Naive thymus-derived CD4-positive, alpha-beta T cell (primary cell): ENCODE measurements at regions of chrX and their contacts with region 1.

Region 1: GRCh38 chrX:83469551-83469950 is 38.5 kb upstream of the POU3F4 start:
- DNase-seq: no peak
- ATAC-seq: no peak
- H3K4me3 ChIP-seq: no peak overlapping the region
- H3K4me3 Mint-ChIP-seq: no peak overlapping the region
- H3K27ac ChIP-seq: no peak overlapping the region
- H3K27ac Mint-ChIP-seq: no peak overlapping the region
- H3K4me1 ChIP-seq: no peaks in the 10 kb centered on the region
- H3K4me1 Mint-ChIP-seq: no peaks in the 10 kb centered on the region
- H3K27me3 ChIP-seq: no peaks in the 10 kb centered on the region
- H3K27me3 Mint-ChIP-seq: no peaks in the 10 kb centered on the region

Region 2: DNA sequence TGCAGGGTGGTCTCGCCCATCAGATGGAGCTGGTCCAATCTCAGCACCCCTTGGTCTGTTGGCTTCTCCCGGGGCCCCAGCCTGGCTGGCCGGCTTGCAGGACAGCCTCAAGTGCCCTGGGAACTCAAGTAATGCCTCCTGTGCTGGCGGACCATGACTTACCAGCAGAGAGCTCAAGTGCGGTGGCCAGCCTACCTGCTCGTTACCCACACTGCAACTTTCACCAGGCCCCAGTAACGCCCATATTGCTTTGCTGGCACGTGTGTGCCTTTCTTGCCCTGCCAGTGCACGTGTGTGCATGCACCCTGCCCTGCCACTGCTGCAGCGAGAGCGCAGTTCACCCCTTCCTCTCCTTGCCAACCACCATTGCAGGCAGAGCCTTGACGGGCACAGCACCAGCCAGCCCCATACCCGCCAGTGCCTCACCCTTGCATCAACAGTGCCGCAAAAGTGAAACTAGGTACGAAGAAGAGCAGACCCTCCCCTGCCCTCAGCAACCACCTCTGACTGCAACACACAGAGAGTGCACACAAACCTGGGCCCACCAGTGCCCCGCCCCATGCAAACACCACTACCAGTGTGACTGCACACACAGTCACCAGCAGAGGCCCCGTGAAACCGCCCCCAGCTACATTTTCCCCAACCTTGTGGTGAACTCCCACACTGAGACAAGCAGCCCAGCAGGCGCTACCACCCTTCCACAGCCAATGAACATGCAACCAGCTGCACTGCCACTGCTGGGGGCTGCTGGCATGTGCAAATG is 50.3 kb before region 1 on chrX:
- CTCF ChIA-PET with region 1: no interaction called
- POLR2A ChIA-PET with region 1: no interaction called
- intact Hi-C with region 1: no loop called
- DNase-seq: no peak
- ATAC-seq: no peak
- H3K4me3 ChIP-seq: no peak overlapping the region
- H3K4me3 Mint-ChIP-seq: no peak overlapping the region
- H3K27ac ChIP-seq: no peak overlapping the region
- H3K27ac Mint-ChIP-seq: no peak overlapping the region
- H3K4me1 ChIP-seq: no peaks in the 10 kb centered on the region
- H3K4me1 Mint-ChIP-seq: no peaks in the 10 kb centered on the region
- H3K27me3 ChIP-seq: no peaks in the 10 kb centered on the region
- H3K27me3 Mint-ChIP-seq: no peaks in the 10 kb centered on the region

Region 3: DNA sequence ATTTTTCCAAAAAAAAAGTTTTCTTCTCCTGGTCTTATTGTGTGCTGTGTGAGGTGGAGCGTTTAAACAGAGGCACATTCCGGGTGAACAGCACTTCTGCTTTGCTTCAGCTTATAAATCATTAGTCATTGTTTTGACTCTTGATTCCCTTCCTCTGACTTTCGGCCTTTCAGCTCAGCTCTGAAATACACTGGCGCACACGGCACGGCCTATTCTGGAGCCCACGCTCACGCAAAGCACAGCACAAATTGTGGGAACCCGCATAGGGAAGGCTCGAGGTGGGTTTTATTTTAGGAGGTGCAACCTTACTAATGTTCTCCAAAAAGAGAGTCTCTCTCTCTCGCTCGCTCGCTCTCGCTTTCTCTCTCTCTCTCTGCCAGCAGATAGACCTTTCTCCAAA is 42.6 kb after region 1 on chrX:
- CTCF ChIA-PET with region 1: no interaction called
- POLR2A ChIA-PET with region 1: no interaction called
- intact Hi-C with region 1: no loop called
- DNase-seq: no peak
- ATAC-seq: no peak
- H3K4me3 ChIP-seq: no peak overlapping the region
- H3K4me3 Mint-ChIP-seq: no peak overlapping the region
- H3K27ac ChIP-seq: no peak overlapping the region
- H3K27ac Mint-ChIP-seq: no peak overlapping the region
- H3K4me1 ChIP-seq: no peaks in the 10 kb centered on the region
- H3K4me1 Mint-ChIP-seq: peaks cover 0 to 5% (median 2%) of the 10 kb centered on the region in 7 donors
- H3K27me3 ChIP-seq: no peaks in the 10 kb centered on the region
- H3K27me3 Mint-ChIP-seq: peaks cover 38 to 51% (median 40%) of the 10 kb centered on the region in 5 donors

Region 4: DNA sequence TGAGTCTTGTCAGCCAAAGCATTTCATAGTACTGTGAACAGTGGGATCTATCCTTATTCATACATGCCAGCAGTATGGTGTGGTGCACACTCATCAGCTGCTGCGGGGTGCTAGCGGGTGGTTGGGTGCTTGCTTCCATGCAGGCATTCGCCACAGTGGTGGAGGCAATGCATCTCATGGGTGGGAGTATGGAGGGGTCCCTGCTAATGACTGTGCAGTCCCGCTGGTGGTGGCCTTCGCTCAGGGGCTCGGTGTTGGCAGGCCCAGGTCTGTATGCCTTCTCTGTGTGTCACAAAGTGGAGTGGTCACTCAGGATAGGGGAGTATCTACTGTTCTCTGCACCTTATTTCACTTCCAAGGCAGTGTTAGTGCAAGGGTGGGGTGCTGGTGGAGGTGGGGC is 161.1 kb after region 1 on chrX:
- CTCF ChIA-PET with region 1: no interaction called
- POLR2A ChIA-PET with region 1: no interaction called
- intact Hi-C with region 1: loop called in 1 of 2 experiments (anchors 1 kb)
- DNase-seq: no peak
- ATAC-seq: no peak
- H3K4me3 ChIP-seq: no peak overlapping the region
- H3K4me3 Mint-ChIP-seq: no peak overlapping the region
- H3K27ac ChIP-seq: no peak overlapping the region
- H3K27ac Mint-ChIP-seq: no peak overlapping the region
- H3K4me1 ChIP-seq: no peaks in the 10 kb centered on the region
- H3K4me1 Mint-ChIP-seq: peaks cover 0 to 6% (median 0%) of the 10 kb centered on the region in 7 donors
- H3K27me3 ChIP-seq: no peaks in the 10 kb centered on the region
- H3K27me3 Mint-ChIP-seq: no peaks in the 10 kb centered on the region

Region 5: DNA sequence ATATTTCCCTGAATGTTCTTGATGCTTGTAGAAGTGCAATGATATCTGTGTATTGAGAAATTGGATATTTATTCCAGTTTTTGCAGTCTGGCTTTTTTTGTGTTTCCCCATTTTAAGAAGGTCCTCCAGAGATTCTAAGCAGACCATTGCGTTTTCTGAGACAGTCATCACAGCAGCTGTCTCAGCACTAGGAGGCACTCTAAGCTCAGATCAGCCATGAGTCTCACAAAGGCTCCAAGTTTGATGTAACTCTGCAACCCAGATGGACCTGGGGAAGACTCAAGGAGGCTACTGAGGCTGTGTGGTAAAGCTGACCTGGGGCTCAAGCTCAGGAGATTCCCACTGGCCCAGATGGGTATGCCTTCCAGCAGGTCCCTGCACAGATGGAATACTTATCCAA is 302.1 kb after region 1 on chrX:
- CTCF ChIA-PET with region 1: no interaction called
- POLR2A ChIA-PET with region 1: no interaction called
- intact Hi-C with region 1: no loop called
- DNase-seq: no peak
- ATAC-seq: no peak
- H3K4me3 ChIP-seq: no peak overlapping the region
- H3K4me3 Mint-ChIP-seq: no peak overlapping the region
- H3K27ac ChIP-seq: no peak overlapping the region
- H3K27ac Mint-ChIP-seq: no peak overlapping the region
- H3K4me1 ChIP-seq: no peaks in the 10 kb centered on the region
- H3K4me1 Mint-ChIP-seq: no peaks in the 10 kb centered on the region
- H3K27me3 ChIP-seq: no peaks in the 10 kb centered on the region
- H3K27me3 Mint-ChIP-seq: no peaks in the 10 kb centered on the region